ENCODE measurements at regions of chr9 and their contacts with region 1.

Region 1: GRCh38 chr9:77475641-77476473 is 172.3 kb downstream of the GNA14 start:
- DNase-seq: peak; percentile 88
- H3K4me3 Mint-ChIP-seq: peak overlapping the region; percentile 59
- H3K27ac Mint-ChIP-seq: peak overlapping the region; percentile 91
- H3K4me1 Mint-ChIP-seq: peaks cover 33% of the 10 kb centered on the region
- H3K27me3 Mint-ChIP-seq: no peaks in the 10 kb centered on the region

Region 2: DNA sequence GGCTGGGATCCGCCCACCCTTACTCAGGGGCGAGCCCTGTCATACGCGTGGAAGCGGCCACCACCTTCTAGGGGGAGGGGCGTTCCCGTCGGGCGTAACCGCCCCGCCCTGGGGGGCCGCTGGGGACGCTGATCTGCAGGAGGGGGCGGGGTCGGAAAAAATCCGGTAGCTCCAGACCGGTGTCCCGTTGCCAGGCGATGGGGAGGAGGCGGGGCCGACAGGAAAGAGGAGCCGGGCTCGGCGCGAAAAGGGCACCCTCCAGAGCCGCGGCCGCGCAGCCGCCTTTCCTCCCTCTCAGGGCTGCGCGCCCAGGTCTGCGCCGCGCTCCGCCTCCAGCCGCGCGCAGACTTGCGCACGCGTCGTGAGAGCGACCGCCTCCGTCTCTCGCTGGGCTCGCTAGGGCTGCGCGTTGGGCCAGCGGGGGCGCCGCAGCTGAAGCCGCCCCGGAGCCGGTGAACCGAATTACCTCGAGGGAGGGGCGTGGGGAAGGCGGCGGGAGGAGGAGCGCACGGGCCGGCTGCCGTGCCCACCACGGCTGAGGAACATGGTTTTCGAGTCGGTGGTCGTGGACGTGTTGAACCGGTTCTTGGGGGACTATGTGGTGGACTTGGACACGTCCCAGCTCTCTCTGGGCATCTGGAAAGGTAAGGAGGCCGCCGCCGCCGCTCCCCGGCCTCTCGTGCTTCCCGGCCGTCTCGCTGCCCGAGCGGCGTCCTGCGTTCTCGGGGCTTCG is 298.5 kb before region 1 on chr9 and contains the start of gene VPS13A:
- intact Hi-C with region 1: loop called (anchors 5 kb)
- DNase-seq: peak; percentile 97
- H3K4me3 Mint-ChIP-seq: peak within 1 kb of the TSS; percentile 99
- H3K27ac Mint-ChIP-seq: peak within 1 kb of the TSS; percentile 92
- H3K4me1 Mint-ChIP-seq: peaks cover 22% of the 10 kb centered on the region
- H3K27me3 Mint-ChIP-seq: peaks cover 15% of the 10 kb centered on the region
- total RNA-seq, gene VPS13A: 44.9 and 47.7 TPM in 2 replicates

Region 3: DNA sequence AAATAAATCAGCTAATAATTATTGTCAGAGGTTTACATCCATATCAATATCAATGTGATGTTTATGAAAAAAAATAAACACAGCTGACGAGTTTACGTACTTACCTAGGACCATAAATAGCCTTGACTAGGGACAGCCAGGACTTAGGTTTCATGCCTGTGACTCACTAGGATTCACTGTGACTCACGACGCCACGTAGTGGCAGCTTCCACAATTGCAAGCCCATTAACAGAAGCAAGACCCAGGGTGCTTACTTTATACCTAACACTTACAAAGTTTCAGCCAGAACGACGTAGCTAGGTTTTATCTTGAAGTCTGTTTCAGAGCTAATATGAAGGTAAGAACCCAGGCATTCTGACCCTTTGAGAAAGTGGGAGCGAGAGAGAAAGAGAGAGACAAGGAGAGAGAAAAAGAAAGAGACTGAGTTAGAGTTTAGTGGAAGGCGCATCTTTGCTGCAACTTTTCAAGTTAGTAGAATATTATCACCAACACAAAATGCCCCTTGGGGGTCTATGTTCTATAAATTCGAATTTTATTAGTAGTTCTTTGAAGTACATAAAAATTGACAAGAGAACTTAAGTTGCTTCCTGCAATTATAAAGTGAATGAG is 18.9 kb before region 1 on chr9:
- intact Hi-C with region 1: loop called (anchors 1 kb)
- DNase-seq: peak; percentile 95
- H3K4me3 Mint-ChIP-seq: no peak overlapping the region
- H3K27ac Mint-ChIP-seq: no peak overlapping the region
- H3K4me1 Mint-ChIP-seq: peaks cover 25% of the 10 kb centered on the region
- H3K27me3 Mint-ChIP-seq: no peaks in the 10 kb centered on the region

Region 4: DNA sequence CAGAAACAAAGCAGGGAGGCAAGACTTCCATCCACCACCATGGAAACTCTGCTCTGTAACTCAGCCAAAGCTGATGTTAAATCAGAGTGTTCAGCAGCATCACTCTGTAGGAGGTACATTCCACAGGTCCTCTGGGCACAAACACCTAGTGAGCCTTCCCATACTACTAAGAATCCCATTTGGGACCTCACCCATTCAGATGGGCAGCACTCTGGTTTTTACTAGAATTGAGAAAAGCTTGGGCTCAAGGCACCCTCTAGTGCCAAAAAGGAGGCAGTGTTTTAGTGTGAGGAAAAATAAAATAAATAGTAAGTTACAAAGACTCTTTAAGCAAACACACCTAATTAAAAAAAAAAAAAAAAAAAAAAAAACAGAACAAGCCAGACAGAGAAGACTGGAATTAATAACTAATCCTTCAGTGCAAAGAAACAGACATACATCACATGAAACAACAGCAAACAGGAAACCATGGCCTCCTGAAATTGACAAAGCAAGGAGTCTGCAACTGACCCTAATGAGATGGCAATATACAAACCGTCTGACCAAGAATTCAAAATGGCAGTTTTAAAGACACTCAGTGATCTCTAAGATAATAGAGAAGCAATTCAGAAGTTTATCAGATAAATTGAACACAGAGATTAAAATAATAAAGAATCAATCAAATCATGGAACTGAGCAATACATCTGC is 12.7 kb after region 1 on chr9:
- intact Hi-C with region 1: loop called (anchors 1 kb)
- DNase-seq: peak; percentile 61
- H3K4me3 Mint-ChIP-seq: peak overlapping the region; percentile 75
- H3K27ac Mint-ChIP-seq: no peak overlapping the region
- H3K4me1 Mint-ChIP-seq: peaks cover 13% of the 10 kb centered on the region
- H3K27me3 Mint-ChIP-seq: peaks cover 4% of the 10 kb centered on the region

Region 5: DNA sequence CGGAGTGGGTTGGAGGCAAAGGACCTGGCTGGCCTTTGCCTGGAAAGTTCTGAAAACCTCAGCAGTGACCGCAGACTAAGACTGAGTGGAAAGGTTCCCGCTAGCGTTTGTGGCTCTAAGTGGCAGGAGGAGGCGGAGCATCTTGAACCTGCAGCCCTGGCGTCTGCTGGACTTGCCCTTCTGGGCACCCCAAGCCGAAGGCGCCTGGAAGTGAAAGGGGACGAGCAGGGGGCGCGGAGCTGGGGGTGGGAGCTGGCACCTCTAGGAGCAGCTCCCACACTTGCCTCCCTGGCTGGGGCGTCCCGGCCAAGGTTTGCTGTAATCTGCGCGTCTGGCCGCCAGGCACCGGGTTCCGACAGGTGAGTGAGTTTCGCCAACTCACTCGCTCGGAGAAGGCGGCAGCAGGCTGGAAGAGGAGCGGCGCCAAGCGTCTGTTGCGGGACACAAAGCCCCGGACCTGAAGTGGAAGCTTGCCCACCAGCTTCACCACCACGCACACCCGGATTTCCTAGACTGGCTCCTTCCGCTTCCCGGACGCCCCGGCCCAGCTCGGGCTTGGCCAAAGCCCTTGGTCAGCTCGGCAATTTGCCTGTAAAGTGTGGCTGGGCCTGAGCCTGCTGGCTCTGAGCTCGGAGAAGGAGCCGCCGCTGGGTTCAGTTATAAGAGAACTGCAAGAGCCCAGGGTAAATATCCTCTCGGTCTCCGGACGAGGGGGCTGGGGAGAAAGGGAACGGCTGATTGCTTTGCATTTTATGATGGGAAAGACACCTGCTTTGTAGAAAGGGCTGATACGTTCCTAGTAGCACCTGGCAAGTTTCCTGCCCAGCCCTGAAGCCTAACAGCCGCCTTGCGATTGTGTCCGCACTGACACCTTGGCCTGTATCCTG is 172.6 kb after region 1 on chr9 and contains the start of gene GNA14:
- intact Hi-C with region 1: no loop called
- DNase-seq: peak; percentile 58
- H3K4me3 Mint-ChIP-seq: peak within 1 kb of the TSS; percentile 79
- H3K27ac Mint-ChIP-seq: no peak within 1 kb of the TSS
- H3K4me1 Mint-ChIP-seq: peaks cover 5% of the 10 kb centered on the region
- H3K27me3 Mint-ChIP-seq: peaks cover 55% of the 10 kb centered on the region
- total RNA-seq, gene GNA14: not detected in 2 replicates

Region 6: GRCh38 chr9:77725820-77726219 is 250.0 kb after region 1 on chr9:
- intact Hi-C with region 1: loop called (anchors 5 kb)
- DNase-seq: peak; percentile 73
- H3K4me3 Mint-ChIP-seq: peak overlapping the region; percentile 13
- H3K27ac Mint-ChIP-seq: peak overlapping the region; percentile 87
- H3K4me1 Mint-ChIP-seq: peaks cover 27% of the 10 kb centered on the region
- H3K27me3 Mint-ChIP-seq: no peaks in the 10 kb centered on the region

Region 7: GRCh38 chr9:77744841-77745430 is 269.1 kb after region 1 on chr9:
- intact Hi-C with region 1: loop called (anchors 5 kb)
- DNase-seq: no peak
- H3K4me3 Mint-ChIP-seq: peak overlapping the region; percentile 39
- H3K27ac Mint-ChIP-seq: peak overlapping the region; percentile 68
- H3K4me1 Mint-ChIP-seq: peaks cover 29% of the 10 kb centered on the region
- H3K27me3 Mint-ChIP-seq: no peaks in the 10 kb centered on the region

Region 8: GRCh38 chr9:78121488-78121887 is 645.6 kb after region 1 on chr9:
- intact Hi-C with region 1: loop called (anchors 2 kb)
- DNase-seq: peak; percentile 86
- H3K4me3 Mint-ChIP-seq: no peak overlapping the region
- H3K27ac Mint-ChIP-seq: no peak overlapping the region
- H3K4me1 Mint-ChIP-seq: peaks cover 27% of the 10 kb centered on the region
- H3K27me3 Mint-ChIP-seq: peaks cover 16% of the 10 kb centered on the region

Measured in activated CD4-positive, alpha-beta T cell treated with anti-CD3 and anti-CD28 coated beads, Interleukin-2, amount 10 ng/mL, durations not matched to agents 24 days and 14 days (primary cell).